Aorta (tissue), 5 donors: ENCODE measurements at regions of chr9 and their contacts with region 1.

Region 1: GRCh38 chr9:100714372-100715099 is 136.7 kb downstream of the CAVIN4 start:
- DNase-seq: no peak
- ATAC-seq: peak; percentile 74
- H3K4me3 ChIP-seq: no peak overlapping the region
- H3K27ac ChIP-seq: no peak overlapping the region
- H3K4me1 ChIP-seq: no peaks in the 10 kb centered on the region
- H3K27me3 ChIP-seq: no peaks in the 10 kb centered on the region

Region 2: DNA sequence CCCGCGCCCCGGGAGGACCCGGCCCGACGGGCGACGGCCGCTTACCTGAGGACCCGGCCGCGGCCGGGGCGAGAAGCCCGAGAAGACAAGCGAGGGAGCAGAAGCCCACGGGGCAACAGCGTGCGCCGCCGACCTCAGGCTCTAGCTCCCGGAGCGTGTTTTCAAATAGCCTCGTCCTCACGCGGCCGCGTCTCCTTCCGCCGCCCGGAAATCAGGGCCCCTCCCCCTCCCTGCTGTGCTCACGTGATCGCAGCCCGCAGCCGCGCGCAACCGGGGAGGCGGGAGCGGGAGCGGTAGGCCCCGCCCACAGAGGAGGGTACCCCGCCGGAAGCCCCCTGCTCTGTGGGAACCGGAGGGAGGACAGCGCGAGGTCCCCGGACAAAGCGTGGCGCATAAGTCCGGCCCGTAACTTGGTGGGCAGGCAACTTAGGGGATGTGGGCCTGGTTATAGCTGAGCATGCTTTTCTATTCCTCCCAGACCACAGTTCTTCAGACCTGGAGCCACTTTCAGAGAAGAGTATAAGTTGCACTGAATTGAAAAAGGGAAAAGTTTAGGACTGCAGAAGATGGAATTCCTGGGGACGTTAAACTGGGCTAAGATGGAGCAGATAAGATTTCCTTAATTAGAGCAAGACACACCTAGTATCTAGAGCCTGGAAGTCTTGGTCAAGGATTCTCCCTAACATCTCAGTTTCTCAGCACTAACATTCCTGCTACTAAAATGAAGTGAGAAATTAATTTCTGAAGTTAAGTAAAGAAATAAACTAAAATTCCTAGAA is 361.6 kb before region 1 on chr9 and contains the start of gene TEX10:
- intact Hi-C with region 1: no loop called
- DNase-seq: peak; percentile 93 to 96
- ATAC-seq: peak; percentile 98
- H3K4me3 ChIP-seq: peak within 1 kb of the TSS; percentile 82 to 83
- H3K27ac ChIP-seq: peak within 1 kb of the TSS in 1 of 2 donors; percentile 6
- H3K4me1 ChIP-seq: peaks cover 2 to 5% of the 10 kb centered on the region in 2 donors
- H3K27me3 ChIP-seq: no peaks in the 10 kb centered on the region
- total RNA-seq, gene TEX10: 10.6 to 12.9 TPM

Region 3: GRCh38 chr9:100756221-100756620 is 41.7 kb after region 1 on chr9:
- intact Hi-C with region 1: no loop called
- DNase-seq: no peak
- ATAC-seq: no peak
- H3K4me3 ChIP-seq: no peak overlapping the region
- H3K27ac ChIP-seq: no peak overlapping the region
- H3K4me1 ChIP-seq: no peaks in the 10 kb centered on the region
- H3K27me3 ChIP-seq: no peaks in the 10 kb centered on the region

Region 4: GRCh38 chr9:101235105-101235866 is 520.8 kb after region 1 on chr9:
- intact Hi-C with region 1: no loop called
- DNase-seq: no peak
- ATAC-seq: no peak
- H3K4me3 ChIP-seq: no peak overlapping the region
- H3K27ac ChIP-seq: no peak overlapping the region
- H3K4me1 ChIP-seq: peaks cover 0 to 1% of the 10 kb centered on the region in 2 donors
- H3K27me3 ChIP-seq: no peaks in the 10 kb centered on the region

Region 5: GRCh38 chr9:101311758-101312420 is 597.4 kb after region 1 on chr9:
- intact Hi-C with region 1: loop called in 1 of 2 experiments (anchors 10 kb)
- DNase-seq: no peak
- ATAC-seq: peak; percentile 70
- H3K4me3 ChIP-seq: no peak overlapping the region
- H3K27ac ChIP-seq: no peak overlapping the region
- H3K4me1 ChIP-seq: no peaks in the 10 kb centered on the region
- H3K27me3 ChIP-seq: no peaks in the 10 kb centered on the region